Naive thymus-derived CD4-positive, alpha-beta T cell (primary cell): ENCODE measurements at regions of chr19 and their contacts with region 1.

Region 1: GRCh38 chr19:39125554-39126311 is at the start of gene PAK4:
- DNase-seq: peak; percentile 89 to 99 (median 92)
- ATAC-seq: peak; percentile 99
- H3K4me3 ChIP-seq: peak within 1 kb of the TSS; percentile 61
- H3K4me3 Mint-ChIP-seq: peak within 1 kb of the TSS; percentile 90 to 98 (median 94)
- H3K27ac ChIP-seq: peak within 1 kb of the TSS; percentile 90
- H3K27ac Mint-ChIP-seq: peak within 1 kb of the TSS; percentile 92 to 99 (median 97)
- H3K4me1 ChIP-seq: peaks cover 0 to 10% of the 10 kb centered on the region in 2 donors
- H3K4me1 Mint-ChIP-seq: peaks cover 26 to 50% (median 37%) of the 10 kb centered on the region in 7 donors
- H3K27me3 ChIP-seq: no peaks in the 10 kb centered on the region
- H3K27me3 Mint-ChIP-seq: peaks cover 0 to 7% (median 0%) of the 10 kb centered on the region in 5 donors
- total RNA-seq, gene PAK4: 9.3 to 17.5 (median 12.7) TPM

Region 2: DNA sequence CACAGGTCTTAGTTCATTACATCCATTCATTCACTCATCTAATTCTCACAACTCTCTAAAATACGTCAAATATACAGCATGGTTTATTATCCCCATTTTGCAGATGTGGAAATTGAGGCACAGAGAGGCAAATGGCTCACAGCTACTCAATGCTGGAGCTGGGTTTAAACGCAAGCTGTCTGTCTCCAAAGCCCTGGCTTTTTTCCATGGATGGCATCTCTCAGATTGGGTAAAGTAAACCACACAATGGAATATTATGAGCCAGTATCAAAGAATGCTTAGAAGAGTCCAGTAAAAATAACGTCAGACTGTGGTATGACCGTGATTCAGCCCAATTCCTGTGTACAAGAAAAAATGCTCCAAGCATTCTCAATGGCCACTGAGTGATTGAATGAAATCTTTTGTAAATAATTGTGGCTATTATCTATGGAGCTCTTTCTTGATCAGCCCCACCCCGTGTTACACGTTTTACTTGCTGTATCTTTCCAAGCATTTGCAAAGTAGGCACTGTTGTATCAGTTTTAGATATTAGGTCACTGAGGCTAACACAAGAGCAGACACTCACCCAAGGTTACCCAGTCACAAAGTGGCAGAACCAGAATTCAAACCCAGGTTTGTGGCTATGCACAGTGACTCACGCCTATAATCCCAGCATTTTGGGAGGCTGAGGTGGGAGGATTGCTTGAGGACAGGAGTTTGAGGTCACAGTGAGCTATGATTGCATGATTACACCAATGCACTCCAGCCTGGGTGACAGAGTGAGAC is 47.1 kb before region 1 on chr19:
- CTCF ChIA-PET with region 1: no interaction called
- POLR2A ChIA-PET with region 1: no interaction called
- intact Hi-C with region 1: loop called in 1 of 2 experiments (anchors 1 kb)
- DNase-seq: no peak
- ATAC-seq: no peak
- H3K4me3 ChIP-seq: no peak overlapping the region
- H3K4me3 Mint-ChIP-seq: no peak overlapping the region
- H3K27ac ChIP-seq: no peak overlapping the region
- H3K27ac Mint-ChIP-seq: no peak overlapping the region
- H3K4me1 ChIP-seq: peaks cover 15 to 17% of the 10 kb centered on the region in 2 donors
- H3K4me1 Mint-ChIP-seq: peaks cover 12 to 30% (median 20%) of the 10 kb centered on the region in 7 donors
- H3K27me3 ChIP-seq: peaks cover 12 to 13% of the 10 kb centered on the region in 2 donors
- H3K27me3 Mint-ChIP-seq: peaks cover 17 to 33% (median 25%) of the 10 kb centered on the region in 5 donors

Region 3: DNA sequence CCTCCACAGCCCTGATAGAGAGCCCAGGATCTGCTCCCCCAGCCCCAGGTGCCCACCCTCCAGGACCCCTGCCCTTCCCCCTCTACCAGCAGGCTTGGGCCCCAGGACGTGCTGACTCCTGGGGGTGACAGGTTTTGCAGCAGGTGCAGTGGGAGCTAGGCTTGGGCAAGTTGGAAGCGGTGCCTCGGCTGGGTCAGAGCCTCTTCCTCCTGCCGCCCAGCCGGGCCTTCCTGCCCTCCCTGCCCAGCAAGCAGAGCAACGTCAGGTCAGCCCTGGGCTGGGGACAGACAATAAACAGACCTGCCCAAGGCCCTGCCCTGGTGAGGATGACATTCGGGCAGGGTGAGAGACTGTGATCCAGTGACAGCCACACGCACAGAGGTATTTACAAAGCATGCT is 61.8 kb after region 1 on chr19:
- CTCF ChIA-PET with region 1: interaction called, 10 read pairs
- POLR2A ChIA-PET with region 1: no interaction called
- intact Hi-C with region 1: no loop called
- DNase-seq: no peak
- ATAC-seq: no peak
- H3K4me3 ChIP-seq: no peak overlapping the region
- H3K4me3 Mint-ChIP-seq: no peak overlapping the region
- H3K27ac ChIP-seq: no peak overlapping the region
- H3K27ac Mint-ChIP-seq: peak overlapping the region in 2 of 9 donors; percentile 7 to 42
- H3K4me1 ChIP-seq: no peaks in the 10 kb centered on the region
- H3K4me1 Mint-ChIP-seq: peaks cover 0 to 4% (median 0%) of the 10 kb centered on the region in 7 donors
- H3K27me3 ChIP-seq: no peaks in the 10 kb centered on the region
- H3K27me3 Mint-ChIP-seq: peaks cover 5 to 31% (median 10%) of the 10 kb centered on the region in 5 donors

Region 4: GRCh38 chr19:39328046-39328705 is 202.4 kb after region 1 on chr19:
- CTCF ChIA-PET with region 1: interaction called, 21 read pairs
- POLR2A ChIA-PET with region 1: interaction called, 3 read pairs
- intact Hi-C with region 1: loop called (anchors 1 kb)
- DNase-seq: peak; percentile 59 to 86 (median 71)
- ATAC-seq: peak; percentile 92
- H3K4me3 ChIP-seq: no peak overlapping the region
- H3K4me3 Mint-ChIP-seq: peak overlapping the region in 9 of 10 donors; percentile 42 to 75 (median 54)
- H3K27ac ChIP-seq: peak overlapping the region; percentile 60
- H3K27ac Mint-ChIP-seq: peak overlapping the region; percentile 71 to 91 (median 80)
- H3K4me1 ChIP-seq: peaks cover 17 to 42% of the 10 kb centered on the region in 2 donors
- H3K4me1 Mint-ChIP-seq: peaks cover 31 to 66% (median 45%) of the 10 kb centered on the region in 7 donors
- H3K27me3 ChIP-seq: no peaks in the 10 kb centered on the region
- H3K27me3 Mint-ChIP-seq: no peaks in the 10 kb centered on the region

Region 5: GRCh38 chr19:39335168-39335548 is 209.4 kb after region 1 on chr19:
- CTCF ChIA-PET with region 1: interaction called, 7 read pairs
- POLR2A ChIA-PET with region 1: interaction called, 4 read pairs
- intact Hi-C with region 1: loop called (anchors 1 to 2 kb)
- DNase-seq: peak in 5 of 9 donors; percentile 24 to 50 (median 40)
- ATAC-seq: peak; percentile 44
- H3K4me3 ChIP-seq: peak overlapping the region; percentile 97
- H3K4me3 Mint-ChIP-seq: peak overlapping the region; percentile 98 to 100 (median 100)
- H3K27ac ChIP-seq: peak overlapping the region; percentile 94
- H3K27ac Mint-ChIP-seq: peak overlapping the region; percentile 94 to 100 (median 99)
- H3K4me1 ChIP-seq: peaks cover 29 to 58% of the 10 kb centered on the region in 2 donors
- H3K4me1 Mint-ChIP-seq: peaks cover 49 to 80% (median 56%) of the 10 kb centered on the region in 7 donors
- H3K27me3 ChIP-seq: no peaks in the 10 kb centered on the region
- H3K27me3 Mint-ChIP-seq: no peaks in the 10 kb centered on the region

Region 6: GRCh38 chr19:39397360-39398296 is 271.9 kb after region 1 on chr19:
- CTCF ChIA-PET with region 1: interaction called, 3 read pairs
- POLR2A ChIA-PET with region 1: interaction called, 3 read pairs
- intact Hi-C with region 1: loop called in 1 of 2 experiments (anchors 1 kb)
- DNase-seq: peak; percentile 88 to 97 (median 93)
- ATAC-seq: peak; percentile 71
- H3K4me3 ChIP-seq: peak overlapping the region; percentile 57
- H3K4me3 Mint-ChIP-seq: peak overlapping the region in 9 of 10 donors; percentile 48 to 80 (median 74)
- H3K27ac ChIP-seq: peak overlapping the region; percentile 63
- H3K27ac Mint-ChIP-seq: peak overlapping the region; percentile 84 to 96 (median 93)
- H3K4me1 ChIP-seq: peaks cover 39 to 42% of the 10 kb centered on the region in 2 donors
- H3K4me1 Mint-ChIP-seq: peaks cover 27 to 68% (median 56%) of the 10 kb centered on the region in 7 donors
- H3K27me3 ChIP-seq: no peaks in the 10 kb centered on the region
- H3K27me3 Mint-ChIP-seq: no peaks in the 10 kb centered on the region

Region 7: DNA sequence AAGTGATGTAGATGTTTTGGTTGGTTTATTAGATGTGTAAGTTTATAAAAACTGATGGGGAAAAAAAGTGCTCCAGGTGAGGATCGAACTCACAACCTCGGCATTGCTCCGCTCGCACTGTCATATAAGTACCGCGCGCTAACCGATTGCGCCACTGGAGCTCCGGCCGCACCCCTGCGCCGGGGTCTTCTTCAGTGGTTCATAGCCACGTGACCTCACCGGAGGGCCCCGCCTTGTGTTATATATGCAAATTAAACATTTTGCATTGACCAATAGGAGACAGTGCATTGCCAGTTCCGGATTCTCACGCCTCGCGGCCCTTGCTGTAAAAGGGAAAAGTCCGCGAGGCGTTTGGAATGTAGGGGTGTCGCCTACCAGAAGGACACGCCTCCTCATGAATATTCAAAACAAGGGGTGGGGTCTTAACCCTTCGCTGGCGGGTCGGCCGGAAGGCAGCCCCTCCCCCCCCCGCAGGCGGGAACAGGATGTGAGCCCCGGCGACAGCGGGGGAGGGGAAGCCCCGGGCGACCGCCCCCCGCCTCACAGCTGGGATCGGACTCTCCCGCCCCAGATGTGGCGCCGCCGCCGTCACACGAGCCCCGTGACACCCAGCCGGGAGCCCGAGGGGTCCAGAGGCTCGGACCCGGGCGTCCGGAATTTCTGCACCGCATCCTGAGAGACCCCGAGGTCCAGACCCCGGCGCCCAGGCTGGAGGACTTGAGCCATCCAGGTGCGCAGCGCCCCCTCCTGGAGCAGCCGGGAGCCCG is 286.6 kb after region 1 on chr19 and contains the start of gene PLEKHG2:
- CTCF ChIA-PET with region 1: no interaction called
- POLR2A ChIA-PET with region 1: interaction called, 4 read pairs
- intact Hi-C with region 1: loop called (anchors 1 kb)
- DNase-seq: peak; percentile 95 to 99 (median 99)
- ATAC-seq: peak; percentile 72
- H3K4me3 ChIP-seq: peak within 1 kb of the TSS; percentile 82
- H3K4me3 Mint-ChIP-seq: peak within 1 kb of the TSS; percentile 84 to 99 (median 92)
- H3K27ac ChIP-seq: peak within 1 kb of the TSS; percentile 100
- H3K27ac Mint-ChIP-seq: peak within 1 kb of the TSS; percentile 90 to 100 (median 97)
- H3K4me1 ChIP-seq: peaks cover 24 to 28% of the 10 kb centered on the region in 2 donors
- H3K4me1 Mint-ChIP-seq: peaks cover 24 to 49% (median 35%) of the 10 kb centered on the region in 7 donors
- H3K27me3 ChIP-seq: no peaks in the 10 kb centered on the region
- H3K27me3 Mint-ChIP-seq: peaks cover 0 to 3% (median 0%) of the 10 kb centered on the region in 5 donors
- total RNA-seq, gene PLEKHG2: 16.4 to 205 (median 58.2) TPM